Activated CD4-positive, alpha-beta memory T cell treated with anti-CD3 and anti-CD28 coated beads for 36 hours (primary cell): ENCODE measurements at regions of chr9 and their contacts with region 1.

Region 1: DNA sequence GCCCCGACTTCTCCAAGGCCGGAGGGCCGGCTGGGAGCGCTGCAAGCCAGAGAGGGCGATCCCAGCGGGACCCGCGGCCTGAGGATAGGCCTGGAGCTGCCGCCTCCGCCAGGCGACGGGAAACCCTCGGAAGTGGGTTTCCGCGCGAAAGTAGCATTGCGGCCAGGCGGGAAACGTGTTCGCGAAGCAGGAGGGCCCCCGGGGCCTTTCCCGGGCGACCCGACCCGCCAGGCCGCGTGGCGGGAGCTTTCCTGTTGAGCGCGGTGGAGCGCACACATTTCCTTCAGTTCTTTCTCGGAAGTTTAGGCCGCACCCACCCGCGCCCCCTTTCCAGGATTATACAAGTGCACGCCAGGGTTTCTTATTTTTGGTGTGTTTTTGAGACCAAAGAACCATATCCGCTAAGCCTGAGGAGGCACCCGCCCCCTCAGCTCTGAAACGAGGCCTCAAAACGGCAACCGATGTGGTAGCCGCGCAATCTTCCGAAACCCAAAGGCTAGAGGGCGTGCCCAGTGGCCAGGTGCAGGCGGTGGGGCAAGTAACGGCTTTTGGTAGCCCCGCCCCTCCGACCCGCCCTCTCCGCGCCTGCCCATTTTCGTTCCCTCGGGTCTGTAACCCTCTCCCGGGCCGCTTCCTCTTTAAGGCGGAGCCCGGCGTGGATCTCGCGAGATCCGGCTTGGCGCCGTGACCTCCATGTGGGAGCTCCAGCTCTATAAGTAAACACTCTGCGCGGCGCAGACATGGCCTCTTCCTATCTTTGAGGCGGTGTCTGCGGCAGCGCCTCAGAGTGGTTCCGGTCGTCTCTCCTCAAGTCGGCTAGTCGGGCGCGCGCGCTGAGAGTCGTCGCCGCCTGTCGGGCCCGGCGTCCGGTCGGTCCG is at the start of gene UHRF2:
- DNase-seq: peak; percentile 100
- H3K4me3 Mint-ChIP-seq: peak within 1 kb of the TSS; percentile 80
- H3K27ac Mint-ChIP-seq: peak within 1 kb of the TSS; percentile 94
- H3K4me1 Mint-ChIP-seq: peaks cover 26% of the 10 kb centered on the region
- H3K27me3 Mint-ChIP-seq: no peaks in the 10 kb centered on the region
- total RNA-seq, gene UHRF2: 59.5 to 62.9 TPM

Region 2: DNA sequence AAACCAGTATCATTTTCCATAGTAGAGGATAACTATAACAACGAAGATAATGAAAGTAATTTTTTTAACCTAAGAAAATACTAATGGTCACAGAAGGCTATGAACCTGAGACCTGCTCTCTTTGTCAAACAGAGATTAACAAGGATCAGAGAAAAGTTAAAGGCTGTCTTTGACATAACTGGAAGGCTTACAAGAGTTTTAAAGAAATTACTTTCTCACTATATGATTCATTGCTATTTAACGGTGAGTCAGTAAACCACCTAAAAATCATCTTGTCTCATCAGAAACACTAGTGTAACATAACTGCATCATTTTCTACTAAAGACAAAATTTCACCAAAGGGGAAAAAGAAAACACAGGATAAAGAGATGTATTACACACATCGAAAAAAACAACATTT is 502.8 kb before region 1 on chr9:
- CTCF ChIA-PET with region 1: no interaction called
- POLR2A ChIA-PET with region 1: no interaction called
- intact Hi-C with region 1: loop called (anchors 10 kb)
- DNase-seq: no peak
- H3K4me3 Mint-ChIP-seq: no peak overlapping the region
- H3K27ac Mint-ChIP-seq: peak overlapping the region; percentile 86
- H3K4me1 Mint-ChIP-seq: peaks cover 25% of the 10 kb centered on the region
- H3K27me3 Mint-ChIP-seq: no peaks in the 10 kb centered on the region

Region 3: DNA sequence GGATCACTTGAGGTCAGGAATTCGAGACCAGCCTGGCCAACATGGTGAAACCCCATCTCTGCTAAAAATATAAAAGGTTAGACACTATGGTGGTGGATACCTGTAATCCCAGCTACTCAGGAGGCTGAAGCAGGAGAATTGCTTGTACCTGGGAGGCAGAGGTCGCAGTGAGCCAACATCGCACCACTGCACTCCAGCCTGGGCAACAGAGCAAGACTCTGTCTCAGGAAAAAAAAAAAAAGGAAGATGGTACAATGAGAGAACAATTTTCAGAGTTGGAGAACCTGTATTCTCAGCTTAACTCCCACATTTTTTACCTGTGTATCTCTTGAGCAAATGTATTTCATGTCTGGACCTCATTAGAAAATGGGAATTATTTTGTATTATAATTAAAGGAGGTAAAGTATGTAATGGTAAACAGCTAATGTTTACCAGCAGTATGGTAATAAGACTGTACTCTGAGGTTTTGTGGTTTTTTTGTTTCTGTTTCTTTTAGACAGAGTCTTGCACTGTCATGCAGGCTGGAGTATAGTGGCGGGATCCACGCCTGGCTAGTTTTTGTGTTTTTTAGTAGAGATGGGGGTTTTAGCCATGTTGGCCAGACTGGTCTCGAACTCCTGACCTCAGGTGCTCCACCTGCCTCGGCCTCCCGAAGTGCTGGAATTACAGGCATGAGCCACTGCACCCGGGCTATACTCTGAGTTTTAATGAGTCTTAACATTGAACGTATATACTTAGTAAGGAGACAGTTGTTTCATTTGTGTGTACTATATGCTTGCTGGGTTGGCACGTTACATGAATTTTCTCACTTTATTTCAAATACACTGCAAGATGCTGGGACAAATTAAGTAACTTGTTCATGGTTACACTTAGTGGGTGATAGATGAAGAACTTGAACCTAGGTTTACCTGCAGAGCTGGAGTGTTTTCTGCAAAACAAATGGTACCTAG is 16.5 kb after region 1 on chr9:
- CTCF ChIA-PET with region 1: interaction called, 3 read pairs
- POLR2A ChIA-PET with region 1: interaction called, 13 read pairs
- intact Hi-C with region 1: loop called (anchors 2 kb)
- DNase-seq: peak; percentile 25
- H3K4me3 Mint-ChIP-seq: peak overlapping the region; percentile 20
- H3K27ac Mint-ChIP-seq: peak overlapping the region; percentile 49
- H3K4me1 Mint-ChIP-seq: peaks cover 76% of the 10 kb centered on the region
- H3K27me3 Mint-ChIP-seq: no peaks in the 10 kb centered on the region

Region 4: GRCh38 chr9:6566409-6567139 is 153.8 kb after region 1 on chr9:
- CTCF ChIA-PET with region 1: interaction called, 7 read pairs
- POLR2A ChIA-PET with region 1: interaction called, 5 read pairs
- intact Hi-C with region 1: loop called (anchors 1 kb)
- DNase-seq: peak; percentile 80
- H3K4me3 Mint-ChIP-seq: no peak overlapping the region
- H3K27ac Mint-ChIP-seq: peak overlapping the region; percentile 88
- H3K4me1 Mint-ChIP-seq: peaks cover 24% of the 10 kb centered on the region
- H3K27me3 Mint-ChIP-seq: peaks cover 3% of the 10 kb centered on the region

Region 5: DNA sequence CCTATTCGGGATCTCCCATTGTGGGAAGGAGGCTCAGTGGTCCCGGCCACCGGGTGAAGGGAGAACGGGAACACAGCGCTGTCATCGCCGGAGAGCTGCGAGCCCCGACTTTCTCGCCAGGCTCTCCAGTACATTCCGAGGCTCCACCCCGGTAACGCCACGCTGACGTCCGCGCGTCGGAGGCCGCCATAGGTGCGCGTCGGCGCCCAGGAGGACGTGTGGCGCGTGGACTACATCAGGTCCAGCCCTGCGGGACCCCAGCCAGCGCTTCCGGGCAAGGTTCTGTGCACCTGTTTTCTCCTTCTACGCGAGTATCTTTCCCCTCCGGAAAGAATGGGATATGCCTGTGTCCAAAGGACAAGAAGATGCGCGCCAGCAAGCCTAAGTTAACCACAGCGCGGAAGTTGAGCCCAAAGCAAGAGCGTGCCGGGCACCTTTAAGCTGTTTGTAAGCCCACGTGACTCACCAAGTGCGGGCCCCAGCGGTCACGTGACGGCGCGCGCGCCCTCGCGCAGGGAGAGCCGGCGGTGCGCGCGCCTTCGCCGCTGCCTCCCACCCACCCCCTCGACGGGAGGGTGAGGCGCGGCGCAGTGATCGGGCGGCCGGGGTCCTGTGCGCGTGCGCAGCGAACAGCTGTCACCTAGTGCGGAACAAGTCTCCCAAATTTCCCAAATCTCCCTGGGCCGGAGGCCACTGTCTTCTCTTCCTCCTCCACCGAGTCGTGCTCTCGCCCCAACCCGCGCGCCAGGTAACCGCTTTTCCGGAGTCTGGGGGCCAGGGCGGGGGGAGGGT is 344.9 kb after region 1 on chr9 and contains the start of gene KDM4C:
- CTCF ChIA-PET with region 1: no interaction called
- POLR2A ChIA-PET with region 1: interaction called, 8 read pairs
- intact Hi-C with region 1: loop called (anchors 1 kb)
- DNase-seq: peak; percentile 96
- H3K4me3 Mint-ChIP-seq: peak within 1 kb of the TSS; percentile 94
- H3K27ac Mint-ChIP-seq: peak within 1 kb of the TSS; percentile 98
- H3K4me1 Mint-ChIP-seq: peaks cover 32% of the 10 kb centered on the region
- H3K27me3 Mint-ChIP-seq: no peaks in the 10 kb centered on the region
- total RNA-seq, gene KDM4C: 26.2 to 28.8 TPM